ENCODE measurements at regions of chr9 and their contacts with region 1.

Region 1: DNA sequence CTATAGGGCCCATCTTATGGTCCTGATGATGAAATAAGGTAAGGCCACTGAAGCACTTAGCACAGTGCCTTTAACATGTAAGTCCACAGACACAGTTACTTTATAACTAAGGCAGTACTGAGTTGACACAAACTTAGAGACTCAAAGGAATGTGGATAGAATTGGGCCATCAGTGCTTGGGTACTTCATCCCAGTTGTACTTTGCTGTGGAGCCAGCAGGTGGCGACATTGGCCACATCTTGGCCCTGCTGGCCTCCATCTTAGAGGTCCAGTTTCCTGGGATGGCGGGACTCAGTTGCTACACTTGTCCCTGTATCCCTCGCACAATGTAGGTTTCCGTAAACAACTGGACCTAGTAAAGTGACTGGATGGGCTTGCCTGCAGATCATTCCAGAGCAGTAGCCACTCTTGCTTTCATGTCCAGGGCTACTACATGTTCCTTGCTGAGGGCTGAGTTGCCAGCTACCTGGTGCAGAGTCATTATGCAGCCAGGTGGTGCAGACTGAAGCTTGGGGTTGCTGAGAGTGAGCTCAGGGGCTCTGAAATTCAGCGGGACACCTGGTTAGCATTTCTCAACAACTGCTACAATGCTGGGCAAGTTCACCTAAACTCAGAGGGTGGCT is 10.6 kb downstream of the MTAP start:
- DNase-seq: peak; percentile 81
- H3K4me3 ChIP-seq: no peak overlapping the region
- H3K27ac ChIP-seq: peak overlapping the region; percentile 85
- H3K4me1 ChIP-seq: peaks cover 20% of the 10 kb centered on the region
- H3K27me3 ChIP-seq: no peaks in the 10 kb centered on the region
- CTCF ChIP-seq: peak; percentile 86 to 89
- POLR2A ChIP-seq: no peak

Region 2: DNA sequence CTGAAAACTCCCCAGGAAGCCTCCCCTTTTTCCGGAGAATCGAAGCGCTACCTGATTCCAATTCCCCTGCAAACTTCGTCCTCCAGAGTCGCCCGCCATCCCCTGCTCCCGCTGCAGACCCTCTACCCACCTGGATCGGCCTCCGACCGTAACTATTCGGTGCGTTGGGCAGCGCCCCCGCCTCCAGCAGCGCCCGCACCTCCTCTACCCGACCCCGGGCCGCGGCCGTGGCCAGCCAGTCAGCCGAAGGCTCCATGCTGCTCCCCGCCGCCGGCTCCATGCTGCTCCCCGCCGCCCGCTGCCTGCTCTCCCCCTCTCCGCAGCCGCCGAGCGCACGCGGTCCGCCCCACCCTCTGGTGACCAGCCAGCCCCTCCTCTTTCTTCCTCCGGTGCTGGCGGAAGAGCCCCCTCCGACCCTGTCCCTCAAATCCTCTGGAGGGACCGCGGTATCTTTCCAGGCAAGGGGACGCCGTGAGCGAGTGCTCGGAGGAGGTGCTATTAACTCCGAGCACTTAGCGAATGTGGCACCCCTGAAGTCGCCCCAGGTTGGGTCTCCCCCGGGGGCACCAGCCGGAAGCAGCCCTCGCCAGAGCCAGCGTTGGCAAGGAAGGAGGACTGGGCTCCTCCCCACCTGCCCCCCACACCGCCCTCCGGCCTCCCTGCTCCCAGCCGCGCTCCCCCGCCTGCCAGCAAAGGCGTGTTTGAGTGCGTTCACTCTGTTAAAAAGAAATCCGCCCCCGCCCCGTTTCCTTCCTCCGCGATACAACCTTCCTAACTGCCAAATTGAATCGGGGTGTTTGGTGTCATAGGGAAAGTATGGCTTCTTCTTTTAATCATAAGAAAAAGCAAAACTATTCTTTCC is 161.7 kb after region 1 on chr9:
- CTCF ChIA-PET with region 1: interaction called, 39 read pairs
- POLR2A ChIA-PET with region 1: interaction called, 4 read pairs
- dilution Hi-C with region 1: no loop called
- intact Hi-C with region 1: no loop called
- DNase-seq: peak; percentile 51
- H3K4me3 ChIP-seq: peak overlapping the region; percentile 31 to 51 (median 35)
- H3K27ac ChIP-seq: no peak overlapping the region
- H3K4me1 ChIP-seq: peaks cover 19% of the 10 kb centered on the region
- H3K27me3 ChIP-seq: peaks cover 77 to 99% of the 10 kb centered on the region in 2 experiments
- CTCF ChIP-seq: no peak
- POLR2A ChIP-seq: no peak

Region 3: GRCh38 chr9:22037954-22038690 is 225.1 kb after region 1 on chr9:
- CTCF ChIA-PET with region 1: interaction called, 77 read pairs
- POLR2A ChIA-PET with region 1: no interaction called
- dilution Hi-C with region 1: no loop called
- intact Hi-C with region 1: loop called (anchors 1 kb)
- DNase-seq: peak; percentile 51
- H3K4me3 ChIP-seq: no peak overlapping the region
- H3K27ac ChIP-seq: no peak overlapping the region
- H3K4me1 ChIP-seq: no peaks in the 10 kb centered on the region
- H3K27me3 ChIP-seq: no peaks in the 10 kb centered on the region
- CTCF ChIP-seq: peak; percentile 22 to 38
- POLR2A ChIP-seq: no peak

Region 4: GRCh38 chr9:22158927-22159346 is 345.9 kb after region 1 on chr9:
- CTCF ChIA-PET with region 1: no interaction called
- POLR2A ChIA-PET with region 1: no interaction called
- dilution Hi-C with region 1: no loop called
- intact Hi-C with region 1: loop called (anchors 1 kb)
- DNase-seq: peak; percentile 59
- H3K4me3 ChIP-seq: no peak overlapping the region
- H3K27ac ChIP-seq: peak overlapping the region; percentile 84
- H3K4me1 ChIP-seq: peaks cover 29% of the 10 kb centered on the region
- H3K27me3 ChIP-seq: no peaks in the 10 kb centered on the region
- CTCF ChIP-seq: no peak
- POLR2A ChIP-seq: peak; percentile 54

Region 5: GRCh38 chr9:22238809-22239684 is 426.0 kb after region 1 on chr9:
- CTCF ChIA-PET with region 1: interaction called, 166 read pairs
- POLR2A ChIA-PET with region 1: no interaction called
- dilution Hi-C with region 1: no loop called
- intact Hi-C with region 1: loop called (anchors 1 kb)
- DNase-seq: peak; percentile 65
- H3K4me3 ChIP-seq: no peak overlapping the region
- H3K27ac ChIP-seq: peak overlapping the region; percentile 42
- H3K4me1 ChIP-seq: peaks cover 23% of the 10 kb centered on the region
- H3K27me3 ChIP-seq: no peaks in the 10 kb centered on the region
- CTCF ChIP-seq: peak; percentile 19 to 41
- POLR2A ChIP-seq: no peak

Region 6: GRCh38 chr9:22446950-22447617 is 634.0 kb after region 1 on chr9:
- CTCF ChIA-PET with region 1: interaction called, 51 read pairs
- POLR2A ChIA-PET with region 1: no interaction called
- dilution Hi-C with region 1: no loop called
- intact Hi-C with region 1: loop called (anchors 1 kb)
- DNase-seq: peak; percentile 72
- H3K4me3 ChIP-seq: peak overlapping the region; percentile 49 to 86 (median 86)
- H3K27ac ChIP-seq: peak overlapping the region; percentile 66
- H3K4me1 ChIP-seq: peaks cover 19% of the 10 kb centered on the region
- H3K27me3 ChIP-seq: peaks cover 5 to 22% of the 10 kb centered on the region in 2 experiments
- CTCF ChIP-seq: peak; percentile 27 to 42
- POLR2A ChIP-seq: no peak